ENCODE measurements at regions of chr11 and their contacts with region 1.

Region 1: GRCh38 chr11:130145975-130146776 is 13.4 kb upstream of the ST14 start:
- DNase-seq: peak; percentile 91
- H3K4me3 Mint-ChIP-seq: no peak overlapping the region
- H3K27ac Mint-ChIP-seq: peak overlapping the region; percentile 65
- H3K4me1 Mint-ChIP-seq: peaks cover 9% of the 10 kb centered on the region
- H3K27me3 Mint-ChIP-seq: no peaks in the 10 kb centered on the region
- CTCF ChIP-seq: peak; percentile 32

Region 2: GRCh38 chr11:129917231-129917630 is 228.9 kb before region 1 on chr11:
- CTCF ChIA-PET with region 1: interaction called, 18 read pairs
- POLR2A ChIA-PET with region 1: no interaction called
- intact Hi-C with region 1: no loop called
- DNase-seq: no peak
- H3K4me3 Mint-ChIP-seq: no peak overlapping the region
- H3K27ac Mint-ChIP-seq: no peak overlapping the region
- H3K4me1 Mint-ChIP-seq: no peaks in the 10 kb centered on the region
- H3K27me3 Mint-ChIP-seq: no peaks in the 10 kb centered on the region
- CTCF ChIP-seq: no peak

Region 3: DNA sequence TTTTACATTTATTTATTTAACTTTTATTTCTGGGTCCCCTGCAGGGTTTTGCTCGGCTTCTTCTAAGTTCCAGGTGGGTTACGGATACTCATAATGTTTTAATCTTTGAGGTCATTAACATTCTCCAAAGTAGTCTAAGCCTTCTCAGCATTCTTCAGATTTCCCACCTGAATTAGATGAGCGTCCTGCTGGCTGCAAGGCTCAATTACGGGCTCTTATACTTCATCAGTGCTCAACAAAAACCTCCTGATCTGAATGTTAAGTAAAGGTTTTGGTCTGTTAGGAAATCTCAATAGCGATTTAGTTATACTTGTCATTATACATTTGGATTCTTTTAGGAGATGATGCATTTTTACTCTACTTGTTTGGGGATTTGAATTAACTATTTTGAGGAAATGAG is 223.5 kb before region 1 on chr11:
- CTCF ChIA-PET with region 1: interaction called, 49 read pairs
- POLR2A ChIA-PET with region 1: interaction called, 5 read pairs
- intact Hi-C with region 1: loop called (anchors 1 kb)
- DNase-seq: no peak
- H3K4me3 Mint-ChIP-seq: no peak overlapping the region
- H3K27ac Mint-ChIP-seq: no peak overlapping the region
- H3K4me1 Mint-ChIP-seq: peaks cover 5% of the 10 kb centered on the region
- H3K27me3 Mint-ChIP-seq: no peaks in the 10 kb centered on the region
- CTCF ChIP-seq: no peak

Region 4: DNA sequence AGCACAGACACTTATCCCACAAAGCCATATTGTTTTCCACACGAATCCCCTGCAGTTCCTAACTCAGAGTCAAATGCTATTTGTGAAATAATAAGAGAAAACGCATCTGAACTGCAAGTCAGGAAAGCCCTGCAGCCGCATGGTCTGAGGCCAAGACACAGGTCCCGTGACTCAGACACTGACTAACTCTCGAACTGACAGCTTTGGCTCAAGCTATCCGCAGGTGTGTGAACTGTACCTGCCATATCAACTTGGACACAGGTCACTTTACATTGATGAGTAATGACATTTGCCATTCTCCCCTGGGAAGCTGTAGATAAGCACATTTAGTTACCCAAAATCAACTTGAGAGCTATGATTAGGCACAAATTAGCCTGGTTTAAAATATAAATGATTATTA is 215.9 kb before region 1 on chr11:
- CTCF ChIA-PET with region 1: interaction called, 49 read pairs
- POLR2A ChIA-PET with region 1: interaction called, 6 read pairs
- intact Hi-C with region 1: no loop called
- DNase-seq: peak; percentile 68
- H3K4me3 Mint-ChIP-seq: no peak overlapping the region
- H3K27ac Mint-ChIP-seq: no peak overlapping the region
- H3K4me1 Mint-ChIP-seq: peaks cover 10% of the 10 kb centered on the region
- H3K27me3 Mint-ChIP-seq: no peaks in the 10 kb centered on the region
- CTCF ChIP-seq: no peak

Region 5: DNA sequence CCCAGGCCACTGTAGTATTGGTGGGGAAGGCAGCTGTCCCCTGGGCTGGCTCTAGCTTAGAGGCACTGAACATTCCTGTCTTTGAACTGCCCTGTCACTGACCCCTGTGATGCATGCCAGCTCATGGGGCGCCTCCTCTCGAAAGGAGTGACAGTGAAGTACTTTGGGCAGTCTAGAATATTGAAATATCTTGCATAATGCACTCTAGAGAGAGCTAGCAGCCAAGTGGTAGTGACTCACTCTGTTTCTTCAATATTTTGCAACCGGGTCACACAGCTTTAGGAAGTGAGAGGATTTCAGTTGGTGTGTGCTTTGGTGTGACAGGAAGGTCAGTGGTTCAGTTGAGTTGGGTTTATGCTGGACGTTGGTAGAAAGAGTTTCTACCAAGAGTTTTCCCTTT is 22.1 kb before region 1 on chr11:
- CTCF ChIA-PET with region 1: interaction called, 81 read pairs
- POLR2A ChIA-PET with region 1: interaction called, 12 read pairs
- intact Hi-C with region 1: no loop called
- DNase-seq: peak; percentile 95
- H3K4me3 Mint-ChIP-seq: peak overlapping the region; percentile 30
- H3K27ac Mint-ChIP-seq: peak overlapping the region; percentile 49
- H3K4me1 Mint-ChIP-seq: peaks cover 25% of the 10 kb centered on the region
- H3K27me3 Mint-ChIP-seq: no peaks in the 10 kb centered on the region
- CTCF ChIP-seq: no peak

Region 6: DNA sequence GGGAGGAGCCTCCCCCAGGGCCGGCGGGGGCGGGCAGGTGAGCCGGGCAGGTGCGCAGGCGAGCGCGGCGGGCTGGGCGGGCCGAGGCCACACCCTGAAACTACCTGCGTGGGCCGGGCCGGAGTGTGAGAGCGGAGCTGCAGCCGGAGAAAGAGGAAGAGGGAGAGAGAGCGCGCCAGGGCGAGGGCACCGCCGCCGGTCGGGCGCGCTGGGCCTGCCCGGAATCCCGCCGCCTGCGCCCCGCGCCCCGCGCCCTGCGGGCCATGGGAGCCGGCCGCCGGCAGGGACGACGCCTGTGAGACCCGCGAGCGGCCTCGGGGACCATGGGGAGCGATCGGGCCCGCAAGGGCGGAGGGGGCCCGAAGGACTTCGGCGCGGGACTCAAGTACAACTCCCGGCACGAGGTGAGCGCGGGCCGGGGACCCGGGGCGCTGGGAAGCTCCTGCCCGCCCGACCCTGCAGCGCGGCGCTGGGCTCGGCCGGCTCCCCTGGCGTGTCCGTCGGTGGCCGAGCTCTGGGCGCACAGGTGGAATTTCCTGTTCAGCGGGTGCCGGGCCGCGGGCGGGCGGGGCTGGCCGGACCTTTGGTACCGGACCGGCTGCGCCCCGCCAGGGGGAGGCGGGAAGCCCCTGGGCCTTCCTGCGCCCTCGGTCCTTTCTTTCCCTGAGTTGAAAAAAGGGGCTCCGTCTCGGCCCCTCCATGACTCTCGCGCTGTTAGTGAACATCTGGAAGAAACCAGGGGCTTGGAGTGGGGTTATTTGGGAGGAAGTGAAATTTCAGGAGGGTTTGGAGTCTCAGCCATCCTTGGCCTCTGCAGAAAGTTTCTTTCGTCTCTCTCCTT is 13.7 kb after region 1 on chr11 and contains the start of gene ST14:
- CTCF ChIA-PET with region 1: interaction called, 19 read pairs
- POLR2A ChIA-PET with region 1: interaction called, 14 read pairs
- intact Hi-C with region 1: no loop called
- DNase-seq: peak; percentile 79
- H3K4me3 Mint-ChIP-seq: peak within 1 kb of the TSS; percentile 76
- H3K27ac Mint-ChIP-seq: peak within 1 kb of the TSS; percentile 63
- H3K4me1 Mint-ChIP-seq: peaks cover 30% of the 10 kb centered on the region
- H3K27me3 Mint-ChIP-seq: peaks cover 17% of the 10 kb centered on the region
- CTCF ChIP-seq: no peak
- total RNA-seq, gene ST14: 24.8 and 27.2 TPM in 2 replicates

Region 7: GRCh38 chr11:130189492-130190210 is 43.5 kb after region 1 on chr11:
- CTCF ChIA-PET with region 1: no interaction called
- POLR2A ChIA-PET with region 1: no interaction called
- intact Hi-C with region 1: no loop called
- DNase-seq: no peak
- H3K4me3 Mint-ChIP-seq: no peak overlapping the region
- H3K27ac Mint-ChIP-seq: no peak overlapping the region
- H3K4me1 Mint-ChIP-seq: no peaks in the 10 kb centered on the region
- H3K27me3 Mint-ChIP-seq: no peaks in the 10 kb centered on the region
- CTCF ChIP-seq: no peak

Measured in MCF 10A (cell line).